CD8-positive, alpha-beta T cell (primary cell): ENCODE measurements at regions of chr3 and their contacts with region 1.

Region 1: GRCh38 chr3:15361494-15362212 is 29.3 kb upstream of the SH3BP5 start:
- DNase-seq: peak in 1 of 9 experiments; percentile 13
- ATAC-seq: no peak
- H3K4me3 ChIP-seq: no peak overlapping the region
- H3K4me3 Mint-ChIP-seq: peak overlapping the region; percentile 44
- H3K27ac ChIP-seq: no peak overlapping the region
- H3K27ac Mint-ChIP-seq: no peak overlapping the region
- H3K4me1 ChIP-seq: peaks cover under 1% of the 10 kb centered on the region
- H3K4me1 Mint-ChIP-seq: peaks cover 28% of the 10 kb centered on the region
- H3K27me3 ChIP-seq: no peaks in the 10 kb centered on the region
- H3K27me3 Mint-ChIP-seq: no peaks in the 10 kb centered on the region
- CTCF ChIP-seq: no peak

Region 2: DNA sequence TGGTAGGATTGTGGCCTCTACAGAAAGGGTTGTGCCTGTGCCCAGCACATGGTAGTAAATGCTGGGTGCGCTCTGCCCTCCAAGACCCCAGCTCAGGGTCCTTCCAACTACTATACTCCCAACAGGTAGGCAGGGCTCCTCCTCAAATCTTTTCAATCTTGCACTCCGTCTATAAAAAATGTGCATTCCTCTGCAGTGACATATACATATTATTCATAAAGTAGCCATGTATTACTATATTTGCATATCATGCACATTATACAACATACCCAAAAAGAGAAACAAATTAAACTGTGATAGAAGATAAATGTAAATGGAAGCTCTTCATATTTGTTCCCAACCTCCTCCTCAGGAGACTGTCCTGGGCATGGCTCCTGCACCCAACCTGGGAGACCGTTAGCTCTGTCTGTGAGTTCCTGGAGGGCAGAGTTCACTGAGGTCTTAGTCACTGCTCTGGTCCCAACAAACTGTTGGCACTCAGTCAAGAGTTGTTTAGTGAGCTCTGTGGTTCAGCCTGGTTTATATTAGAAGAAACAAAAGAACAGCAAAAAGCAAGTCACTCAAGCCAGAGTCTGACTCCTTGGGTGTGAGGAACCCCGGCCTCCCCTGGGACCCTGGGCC is 773.8 kb before region 1 on chr3:
- CTCF ChIA-PET with region 1: no interaction called
- POLR2A ChIA-PET with region 1: no interaction called
- intact Hi-C with region 1: no loop called
- DNase-seq: no peak
- ATAC-seq: no peak
- H3K4me3 ChIP-seq: no peak overlapping the region
- H3K4me3 Mint-ChIP-seq: no peak overlapping the region
- H3K27ac ChIP-seq: no peak overlapping the region
- H3K27ac Mint-ChIP-seq: no peak overlapping the region
- H3K4me1 ChIP-seq: no peaks in the 10 kb centered on the region
- H3K4me1 Mint-ChIP-seq: no peaks in the 10 kb centered on the region
- H3K27me3 ChIP-seq: no peaks in the 10 kb centered on the region
- H3K27me3 Mint-ChIP-seq: peaks cover 14% of the 10 kb centered on the region
- CTCF ChIP-seq: no peak

Region 3: DNA sequence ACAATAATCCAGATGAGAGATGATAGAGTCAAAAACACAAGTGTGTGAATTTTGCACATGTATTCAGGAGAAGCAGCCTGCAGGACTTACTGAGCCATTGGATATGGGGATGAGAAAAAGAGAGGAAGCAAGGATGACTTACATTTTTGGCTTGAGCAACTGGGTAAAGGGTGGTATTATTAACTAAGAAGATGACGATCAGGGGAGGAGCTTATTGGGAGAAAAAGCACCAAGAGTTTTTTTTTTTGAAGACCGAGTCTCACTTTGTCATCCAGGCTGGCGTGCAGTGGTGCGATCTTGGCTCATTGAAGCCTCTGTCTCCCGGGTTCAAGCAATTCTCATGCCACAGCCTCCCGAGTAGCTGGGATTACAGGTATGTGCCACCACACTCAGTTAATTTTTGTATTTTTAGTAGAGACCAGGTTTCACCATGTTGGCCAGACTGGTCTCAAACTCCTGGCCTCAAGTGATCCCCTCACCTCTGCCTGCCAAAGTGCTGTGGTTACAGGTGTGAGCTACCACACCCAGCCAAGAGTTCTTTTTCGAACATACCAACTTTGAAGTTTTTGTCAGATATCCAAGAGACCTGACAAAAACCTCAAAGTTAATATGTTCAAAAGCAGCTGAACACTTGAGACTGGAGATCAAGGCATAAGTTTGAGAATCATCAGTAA is 14.5 kb before region 1 on chr3:
- CTCF ChIA-PET with region 1: interaction called, 3 read pairs
- POLR2A ChIA-PET with region 1: no interaction called
- intact Hi-C with region 1: loop called in 1 of 2 experiments (anchors 1 kb)
- DNase-seq: peak in 2 of 9 experiments; percentile 43 to 54
- ATAC-seq: peak; percentile 29
- H3K4me3 ChIP-seq: no peak overlapping the region
- H3K4me3 Mint-ChIP-seq: peak overlapping the region; percentile 69
- H3K27ac ChIP-seq: no peak overlapping the region
- H3K27ac Mint-ChIP-seq: peak overlapping the region; percentile 73
- H3K4me1 ChIP-seq: peaks cover 34% of the 10 kb centered on the region
- H3K4me1 Mint-ChIP-seq: peaks cover 35% of the 10 kb centered on the region
- H3K27me3 ChIP-seq: no peaks in the 10 kb centered on the region
- H3K27me3 Mint-ChIP-seq: no peaks in the 10 kb centered on the region
- CTCF ChIP-seq: no peak